ENCODE measurements at regions of chr16 and their contacts with region 1.

Region 1: GRCh38 chr16:21584817-21585216 is 14.6 kb upstream of the METTL9 start:
- ATAC-seq: no peak
- H3K4me3 ChIP-seq: no peak overlapping the region
- H3K27ac ChIP-seq: no peak overlapping the region
- H3K4me1 ChIP-seq: no peaks in the 10 kb centered on the region

Region 2: GRCh38 chr16:20484726-20485125 is 1100.1 kb before region 1 on chr16:
- in situ Hi-C with region 1: no loop called
- ATAC-seq: no peak
- H3K4me3 ChIP-seq: no peak overlapping the region
- H3K27ac ChIP-seq: no peak overlapping the region
- H3K4me1 ChIP-seq: no peaks in the 10 kb centered on the region

Region 3: GRCh38 chr16:21638573-21638975 is 53.8 kb after region 1 on chr16:
- in situ Hi-C with region 1: loop called in 1 of 9 experiments (anchors 10 kb)
- ATAC-seq: no peak
- H3K4me3 ChIP-seq: no peak overlapping the region
- H3K27ac ChIP-seq: no peak overlapping the region
- H3K4me1 ChIP-seq: no peaks in the 10 kb centered on the region

Region 4: GRCh38 chr16:22694887-22695382 is 1110.1 kb after region 1 on chr16:
- in situ Hi-C with region 1: loop called in 3 of 9 experiments (anchors 5 kb)
- ATAC-seq: peak in 2 of 8 experiments; percentile 61 to 68
- H3K4me3 ChIP-seq: no peak overlapping the region
- H3K27ac ChIP-seq: no peak overlapping the region
- H3K4me1 ChIP-seq: peaks cover 3 to 7% of the 10 kb centered on the region in 2 donors

Measured in motor neuron (in vitro differentiated cells).